IMR-90 (cell line): ENCODE measurements at regions of chr18 and their contacts with region 1.

Region 1: GRCh38 chr18:44325903-44326635 is 354.6 kb upstream of the SETBP1 start:
- DNase-seq: peak; percentile 61
- ATAC-seq: no peak
- H3K4me3 ChIP-seq: no peak overlapping the region
- H3K27ac ChIP-seq: no peak overlapping the region
- H3K4me1 ChIP-seq: no peaks in the 10 kb centered on the region
- H3K27me3 ChIP-seq: no peaks in the 10 kb centered on the region
- CTCF ChIP-seq: 0 out of 2 replicates have a peak, but pooled peaks have one; percentile 30
- POLR2A ChIP-seq: no peak
- RAD21 ChIP-seq: 0 out of 2 replicates have a peak, but pooled peaks have one; percentile 27

Region 2: GRCh38 chr18:43627848-43628526 is 698.1 kb before region 1 on chr18:
- CTCF ChIA-PET with region 1: no interaction called
- POLR2A ChIA-PET with region 1: no interaction called
- dilution Hi-C with region 1: no loop called
- in situ Hi-C with region 1: loop called (anchors 25 kb)
- intact Hi-C with region 1: no loop called
- DNase-seq: no peak
- ATAC-seq: no peak
- H3K4me3 ChIP-seq: no peak overlapping the region
- H3K27ac ChIP-seq: no peak overlapping the region
- H3K4me1 ChIP-seq: no peaks in the 10 kb centered on the region
- H3K27me3 ChIP-seq: no peaks in the 10 kb centered on the region
- CTCF ChIP-seq: no peak
- POLR2A ChIP-seq: no peak
- RAD21 ChIP-seq: no peak

Region 3: GRCh38 chr18:43789234-43790000 is 536.7 kb before region 1 on chr18:
- CTCF ChIA-PET with region 1: no interaction called
- POLR2A ChIA-PET with region 1: no interaction called
- dilution Hi-C with region 1: no loop called
- in situ Hi-C with region 1: no loop called
- intact Hi-C with region 1: loop called (anchors 2 kb)
- DNase-seq: no peak
- ATAC-seq: peak; percentile 60
- H3K4me3 ChIP-seq: no peak overlapping the region
- H3K27ac ChIP-seq: no peak overlapping the region
- H3K4me1 ChIP-seq: no peaks in the 10 kb centered on the region
- H3K27me3 ChIP-seq: no peaks in the 10 kb centered on the region; the same call in 1 of the 2 replicates
- CTCF ChIP-seq: no peak
- POLR2A ChIP-seq: no peak
- RAD21 ChIP-seq: no peak